ENCODE measurements at regions of chr6 and their contacts with region 1.

Region 1: GRCh38 chr6:110618591-110619267 is 142.3 kb upstream of the SLC22A16 start:
- DNase-seq: no peak
- H3K4me3 ChIP-seq: no peak overlapping the region
- H3K27ac ChIP-seq: peak overlapping the region; percentile 43 to 98 (median 89)
- H3K27me3 ChIP-seq: no peaks in the 10 kb centered on the region
- CTCF ChIP-seq: peak in 52 of 56 donors; percentile 12 to 65 (median 40)

Region 2: GRCh38 chr6:110671116-110671846 is 52.6 kb after region 1 on chr6:
- intact Hi-C with region 1: loop called in 1 of 2 experiments (anchors 10 kb)
- DNase-seq: no peak
- H3K4me3 ChIP-seq: peak overlapping the region in 5 of 59 donors; percentile 3 to 37 (median 14)
- H3K27ac ChIP-seq: peak overlapping the region in 56 of 59 donors; percentile 16 to 94 (median 72)
- H3K27me3 ChIP-seq: no peaks in the 10 kb centered on the region
- CTCF ChIP-seq: no peak

Measured in dorsolateral prefrontal cortex (tissue), 120 donors.